ENCODE measurements at regions of chr1 and their contacts with region 1.

Region 1: DNA sequence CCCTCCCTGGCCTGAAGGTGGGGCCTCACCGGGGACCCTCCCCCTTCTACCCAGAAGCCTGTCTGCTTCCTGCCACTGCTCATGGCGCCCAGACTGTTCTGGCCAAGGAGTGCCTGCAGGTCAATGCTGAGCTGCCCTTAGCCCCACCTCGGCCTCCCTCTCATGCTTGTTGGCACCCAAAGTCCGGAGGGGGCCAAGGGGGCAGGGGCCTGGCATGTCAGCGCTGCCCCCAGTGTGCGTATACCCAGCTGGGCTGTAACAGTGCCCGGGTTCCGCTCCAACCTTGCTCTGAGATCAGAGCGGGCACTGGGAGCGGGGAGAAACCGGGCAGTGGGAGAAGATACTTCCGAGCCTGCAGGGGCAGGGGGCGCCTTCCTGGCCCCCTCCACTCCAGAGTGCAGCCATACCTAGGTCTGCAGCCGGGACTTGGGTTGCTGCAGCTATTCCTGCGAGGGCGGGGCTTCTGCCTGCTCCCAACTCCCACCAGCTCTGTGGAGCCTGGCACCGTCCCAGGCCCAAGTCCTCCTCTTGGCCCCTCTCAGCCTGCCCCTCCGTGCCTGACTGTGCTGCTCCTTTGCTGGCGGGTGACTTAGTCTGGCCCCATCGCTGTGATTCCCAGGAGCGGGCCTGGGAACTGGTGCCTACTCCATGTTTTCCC is 21.4 kb upstream of the TGFB2 start:
- DNase-seq: no peak
- H3K4me3 ChIP-seq: no peak overlapping the region
- H3K4me1 ChIP-seq: peaks cover 3% of the 10 kb centered on the region; the same call in 1 of the 2 replicates
- H3K27me3 ChIP-seq: no peaks in the 10 kb centered on the region

Region 2: DNA sequence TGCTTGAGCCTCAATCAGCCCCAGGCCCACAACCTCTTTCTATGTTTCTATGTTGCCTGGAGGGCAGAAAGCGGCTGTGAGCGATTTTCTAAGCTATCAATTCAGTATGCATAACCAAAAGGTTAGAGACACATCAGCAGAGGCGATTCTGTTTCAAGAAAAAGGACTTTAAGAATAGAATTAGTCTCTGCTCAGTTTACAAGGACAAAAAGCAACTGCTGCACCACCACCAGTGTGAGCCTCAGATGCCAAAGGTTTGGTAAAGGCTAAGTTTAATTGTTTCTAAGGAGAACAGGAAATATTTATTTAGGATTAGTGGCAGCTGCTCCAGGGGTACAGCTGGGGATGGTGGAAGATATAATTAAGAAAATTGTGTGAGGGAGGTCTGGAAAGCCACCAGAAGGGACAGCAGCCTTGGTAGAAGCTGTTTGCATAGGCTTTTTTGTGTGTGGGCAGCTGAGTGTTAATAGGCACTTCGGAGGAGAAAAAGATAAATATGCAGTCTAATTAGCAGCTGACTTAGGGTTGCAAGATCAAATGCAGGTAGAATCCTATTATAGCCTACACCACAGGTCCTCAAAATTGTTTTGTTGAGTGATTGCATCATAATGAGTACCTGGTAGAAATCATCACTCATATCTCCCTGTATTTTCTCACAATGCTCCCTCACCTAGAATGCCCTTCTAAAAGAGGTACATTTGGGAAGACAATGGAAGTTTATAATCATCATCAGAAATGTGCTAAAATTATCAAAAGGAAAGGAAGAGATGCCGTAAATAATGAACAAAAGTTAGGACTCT is 1253.4 kb after region 1 on chr1:
- in situ Hi-C with region 1: loop called (anchors 10 kb)
- DNase-seq: no peak
- H3K4me3 ChIP-seq: no peak overlapping the region
- H3K4me1 ChIP-seq: no peaks in the 10 kb centered on the region
- H3K27me3 ChIP-seq: no peaks in the 10 kb centered on the region; the same call in 1 of the 2 replicates

Measured in HAP-1 (cell line).